CD8-positive, alpha-beta T cell (primary cell): ENCODE measurements at regions of chr20 and their contacts with region 1.

Region 1: DNA sequence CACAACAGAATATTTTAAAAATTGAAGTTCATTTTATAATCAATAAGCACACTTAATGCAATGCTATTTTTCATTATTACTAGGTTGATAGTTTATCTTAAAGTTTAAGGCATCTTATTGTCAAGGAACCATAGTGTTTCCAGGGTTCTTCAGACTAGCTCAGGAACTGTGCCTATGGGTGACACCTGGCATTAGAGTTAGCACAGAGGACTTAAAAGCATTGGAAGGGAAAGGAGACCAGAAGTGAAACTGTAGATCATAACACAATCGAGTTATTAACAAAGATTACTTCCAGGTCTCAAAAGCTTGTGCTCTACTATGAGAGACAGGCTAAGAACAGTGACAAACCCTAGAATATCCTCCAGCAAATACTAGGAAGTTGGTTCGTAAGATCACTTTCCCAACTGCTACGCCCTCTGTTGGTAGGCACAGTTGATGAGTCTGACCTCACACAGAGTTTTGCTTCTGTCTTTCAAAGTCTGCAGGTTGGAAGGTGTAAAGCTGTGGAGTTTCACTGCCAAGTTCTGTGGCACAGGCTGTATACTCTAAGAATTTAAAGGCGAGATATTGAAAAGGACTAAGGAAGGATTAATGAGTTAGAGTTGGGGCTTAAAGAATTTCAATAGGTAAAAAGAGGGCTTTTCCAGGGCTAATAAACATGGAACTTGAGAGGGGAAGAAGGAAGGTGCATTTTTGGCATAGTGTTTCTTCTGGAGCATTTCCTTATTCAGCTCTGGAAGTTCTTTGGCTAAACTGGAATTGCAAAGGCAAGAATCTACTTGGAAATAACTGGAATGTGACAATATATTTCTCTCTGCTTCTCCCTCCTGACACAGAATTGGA is 531.3 kb upstream of the JAG1 start:
- DNase-seq: peak in 3 of 9 experiments; percentile 10 to 33 (median 26)
- ATAC-seq: no peak
- H3K4me3 ChIP-seq: no peak overlapping the region
- H3K4me3 Mint-ChIP-seq: no peak overlapping the region
- H3K27ac ChIP-seq: no peak overlapping the region
- H3K27ac Mint-ChIP-seq: no peak overlapping the region
- H3K4me1 ChIP-seq: no peaks in the 10 kb centered on the region
- H3K4me1 Mint-ChIP-seq: peaks cover 4% of the 10 kb centered on the region
- H3K27me3 ChIP-seq: no peaks in the 10 kb centered on the region
- H3K27me3 Mint-ChIP-seq: no peaks in the 10 kb centered on the region
- CTCF ChIP-seq: peak; percentile 8

Region 2: DNA sequence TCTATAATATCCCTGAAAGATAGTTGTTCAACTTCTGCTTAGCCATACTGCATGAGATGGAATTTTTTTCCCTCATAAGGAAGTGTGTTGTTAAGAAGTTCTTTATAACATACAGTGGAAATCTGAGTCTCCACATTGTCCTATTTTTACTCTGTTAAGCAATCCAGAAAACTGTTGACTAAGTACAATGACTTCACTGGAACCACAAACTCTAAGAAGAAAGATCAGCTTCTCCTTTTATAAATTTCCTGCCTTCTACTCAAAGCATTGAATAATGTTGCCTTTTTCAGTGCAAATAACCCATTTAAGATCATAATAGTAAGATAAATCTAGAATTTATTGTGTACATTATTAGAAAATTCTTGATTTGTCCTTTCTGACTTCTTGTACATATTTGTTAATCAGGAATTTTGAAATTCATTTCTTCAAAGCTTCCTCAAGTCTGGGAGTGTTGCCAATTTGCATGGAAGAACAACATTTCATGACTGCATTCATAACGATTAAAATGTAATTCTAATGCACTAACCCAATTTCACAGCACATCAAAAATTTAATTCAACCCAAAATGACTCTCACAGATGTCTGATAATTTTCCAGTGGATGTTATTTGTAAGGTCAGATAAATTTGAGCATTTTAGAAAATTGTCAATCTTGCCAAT is 1216.0 kb before region 1 on chr20:
- CTCF ChIA-PET with region 1: no interaction called
- POLR2A ChIA-PET with region 1: no interaction called
- intact Hi-C with region 1: loop called in 1 of 2 experiments (anchors 10 kb)
- DNase-seq: no peak
- ATAC-seq: no peak
- H3K4me3 ChIP-seq: no peak overlapping the region
- H3K4me3 Mint-ChIP-seq: no peak overlapping the region
- H3K27ac ChIP-seq: no peak overlapping the region
- H3K27ac Mint-ChIP-seq: no peak overlapping the region
- H3K4me1 ChIP-seq: no peaks in the 10 kb centered on the region
- H3K4me1 Mint-ChIP-seq: no peaks in the 10 kb centered on the region
- H3K27me3 ChIP-seq: no peaks in the 10 kb centered on the region
- H3K27me3 Mint-ChIP-seq: peaks cover 12% of the 10 kb centered on the region
- CTCF ChIP-seq: no peak

Region 3: DNA sequence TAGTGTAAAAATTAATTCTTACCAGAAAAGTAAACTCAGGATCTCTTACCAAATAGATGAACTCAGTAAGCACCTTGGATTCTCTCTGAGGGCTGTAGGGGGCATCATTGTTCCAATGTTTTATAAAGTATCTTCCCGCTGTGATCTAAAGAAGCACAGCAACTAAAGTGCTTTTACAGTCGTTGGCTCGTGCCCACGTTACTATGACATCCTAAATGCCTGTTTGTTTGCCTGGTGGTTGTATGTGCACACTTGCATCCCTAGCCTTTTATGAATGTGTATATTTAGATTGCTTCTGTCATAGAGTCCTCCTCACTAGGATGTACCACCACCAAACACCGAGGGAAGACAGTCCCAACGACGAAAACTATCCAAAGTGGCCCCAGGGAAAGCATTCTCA is 735.5 kb before region 1 on chr20:
- CTCF ChIA-PET with region 1: no interaction called
- POLR2A ChIA-PET with region 1: no interaction called
- intact Hi-C with region 1: loop called (anchors 5 to 10 kb)
- DNase-seq: peak in 3 of 9 experiments; percentile 13 to 67 (median 55)
- ATAC-seq: peak; percentile 36
- H3K4me3 ChIP-seq: no peak overlapping the region
- H3K4me3 Mint-ChIP-seq: no peak overlapping the region
- H3K27ac ChIP-seq: no peak overlapping the region
- H3K27ac Mint-ChIP-seq: no peak overlapping the region
- H3K4me1 ChIP-seq: no peaks in the 10 kb centered on the region
- H3K4me1 Mint-ChIP-seq: peaks cover 9% of the 10 kb centered on the region
- H3K27me3 ChIP-seq: no peaks in the 10 kb centered on the region
- H3K27me3 Mint-ChIP-seq: no peaks in the 10 kb centered on the region
- CTCF ChIP-seq: peak; percentile 36

Region 4: GRCh38 chr20:10476319-10476724 is 728.8 kb before region 1 on chr20:
- CTCF ChIA-PET with region 1: no interaction called
- POLR2A ChIA-PET with region 1: no interaction called
- intact Hi-C with region 1: loop called in 1 of 2 experiments (anchors 10 kb)
- DNase-seq: peak in 1 of 9 experiments; percentile 17
- ATAC-seq: no peak
- H3K4me3 ChIP-seq: no peak overlapping the region
- H3K4me3 Mint-ChIP-seq: no peak overlapping the region
- H3K27ac ChIP-seq: no peak overlapping the region
- H3K27ac Mint-ChIP-seq: no peak overlapping the region
- H3K4me1 ChIP-seq: no peaks in the 10 kb centered on the region
- H3K4me1 Mint-ChIP-seq: peaks cover 18% of the 10 kb centered on the region
- H3K27me3 ChIP-seq: no peaks in the 10 kb centered on the region
- H3K27me3 Mint-ChIP-seq: no peaks in the 10 kb centered on the region
- CTCF ChIP-seq: no peak

Region 5: DNA sequence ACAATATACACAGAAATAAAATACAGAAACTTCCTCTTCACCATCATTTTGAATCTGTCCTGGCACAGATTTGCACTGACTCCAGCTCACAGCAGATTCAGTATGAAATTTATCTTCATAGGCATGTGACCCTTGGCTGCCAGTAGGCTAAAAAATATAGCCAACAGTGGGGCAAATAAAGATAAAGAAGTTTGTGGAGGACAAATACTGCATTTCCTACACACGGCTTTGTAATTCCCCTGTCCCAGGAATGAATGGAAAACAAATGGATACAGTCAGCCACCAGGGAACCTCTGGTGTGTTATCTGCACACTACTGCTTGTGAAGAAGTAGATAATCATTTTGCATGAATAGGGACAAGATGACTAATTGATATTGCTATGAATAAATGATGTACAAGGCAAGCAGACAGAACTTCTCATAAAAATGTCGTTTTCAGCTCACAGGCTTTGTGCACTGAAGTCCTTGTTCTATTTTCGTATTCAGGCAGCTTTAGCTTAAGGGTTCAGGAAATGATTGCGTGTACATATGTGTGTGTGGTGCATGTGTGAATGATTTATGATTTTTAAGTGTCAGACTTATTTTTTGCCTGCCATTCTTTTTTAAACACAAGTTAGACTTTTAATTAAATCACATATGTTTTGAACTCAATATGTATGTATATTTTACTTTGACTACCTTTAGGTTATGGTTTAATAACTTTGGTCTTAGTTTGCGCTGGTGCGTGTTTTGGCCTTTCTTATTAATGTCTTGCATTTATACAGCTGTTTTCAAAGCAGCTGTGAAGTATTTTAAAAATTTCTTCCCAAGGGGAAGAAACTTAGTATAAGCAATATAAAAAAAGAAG is 12.4 kb after region 1 on chr20:
- CTCF ChIA-PET with region 1: no interaction called
- POLR2A ChIA-PET with region 1: no interaction called
- intact Hi-C with region 1: no loop called
- DNase-seq: no peak
- ATAC-seq: no peak
- H3K4me3 ChIP-seq: no peak overlapping the region
- H3K4me3 Mint-ChIP-seq: no peak overlapping the region
- H3K27ac ChIP-seq: no peak overlapping the region
- H3K27ac Mint-ChIP-seq: no peak overlapping the region
- H3K4me1 ChIP-seq: no peaks in the 10 kb centered on the region
- H3K4me1 Mint-ChIP-seq: no peaks in the 10 kb centered on the region
- H3K27me3 ChIP-seq: no peaks in the 10 kb centered on the region
- H3K27me3 Mint-ChIP-seq: no peaks in the 10 kb centered on the region
- CTCF ChIP-seq: no peak

Region 6: DNA sequence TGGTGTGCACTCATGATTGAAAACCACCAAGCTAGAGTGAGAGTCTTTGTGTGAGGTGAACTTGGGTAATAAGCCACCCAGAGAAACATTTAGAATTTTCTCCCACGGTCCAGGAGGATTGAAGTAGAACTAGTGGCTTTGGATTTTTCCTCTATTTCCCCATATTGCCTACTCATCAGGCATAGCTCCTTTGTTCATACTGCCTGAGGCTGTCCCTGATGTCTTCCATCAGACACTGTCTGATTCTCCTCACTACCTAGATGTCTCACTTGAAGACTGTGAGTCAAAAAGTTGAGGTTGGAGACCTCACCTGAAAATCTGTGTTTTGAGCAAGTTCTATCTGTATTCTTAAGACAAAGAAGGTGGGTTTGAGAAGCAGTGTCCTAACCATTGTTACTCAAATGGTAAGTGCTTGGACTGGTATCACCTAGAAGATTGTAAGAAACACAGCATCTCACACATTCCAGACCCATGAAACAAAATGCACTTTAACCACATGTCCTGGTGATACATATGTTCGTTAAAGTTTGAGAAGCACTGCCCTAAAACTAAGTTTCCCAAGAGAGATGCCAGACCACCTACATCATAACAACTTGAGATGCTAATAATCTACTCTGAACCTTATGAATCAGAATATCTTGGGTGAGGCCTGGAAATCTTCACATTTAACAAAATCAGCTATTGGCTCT is 189.1 kb after region 1 on chr20:
- CTCF ChIA-PET with region 1: no interaction called
- POLR2A ChIA-PET with region 1: no interaction called
- intact Hi-C with region 1: no loop called
- DNase-seq: no peak
- ATAC-seq: no peak
- H3K4me3 ChIP-seq: no peak overlapping the region
- H3K4me3 Mint-ChIP-seq: no peak overlapping the region
- H3K27ac ChIP-seq: no peak overlapping the region
- H3K27ac Mint-ChIP-seq: no peak overlapping the region
- H3K4me1 ChIP-seq: no peaks in the 10 kb centered on the region
- H3K4me1 Mint-ChIP-seq: no peaks in the 10 kb centered on the region
- H3K27me3 ChIP-seq: no peaks in the 10 kb centered on the region
- H3K27me3 Mint-ChIP-seq: no peaks in the 10 kb centered on the region
- CTCF ChIP-seq: no peak